Ovary (tissue), 10 donors: ENCODE measurements at regions of chr9 and their contacts with region 1.

Region 1: GRCh38 chr9:136790927-136791641 is at the start of gene TMEM141:
- DNase-seq: peak; percentile 100
- H3K4me3 ChIP-seq: peak within 1 kb of the TSS; percentile 77
- H3K27ac ChIP-seq: peak within 1 kb of the TSS; percentile 78 to 82
- H3K4me1 ChIP-seq: peaks cover 10% of the 10 kb centered on the region
- H3K27me3 ChIP-seq: no peaks in the 10 kb centered on the region
- CTCF ChIP-seq: no peak
- EP300 ChIP-seq: no peak
- POLR2A ChIP-seq: peak; percentile 36
- total RNA-seq, gene TMEM141: 43.1 to 115 (median 64.8) TPM

Region 2: GRCh38 chr9:136599811-136600660 is 191.0 kb before region 1 on chr9:
- intact Hi-C with region 1: no loop called
- DNase-seq: no peak
- H3K4me3 ChIP-seq: no peak overlapping the region
- H3K27ac ChIP-seq: no peak overlapping the region
- H3K4me1 ChIP-seq: no peaks in the 10 kb centered on the region
- H3K27me3 ChIP-seq: no peaks in the 10 kb centered on the region
- CTCF ChIP-seq: no peak
- EP300 ChIP-seq: no peak
- POLR2A ChIP-seq: no peak

Region 3: GRCh38 chr9:136849038-136849959 is 58.2 kb after region 1 on chr9 and contains the start of gene PHPT1:
- intact Hi-C with region 1: loop called in 1 of 4 experiments (anchors 10 kb)
- DNase-seq: peak; percentile 98 to 99 (median 99)
- H3K4me3 ChIP-seq: peak within 1 kb of the TSS; percentile 51
- H3K27ac ChIP-seq: peak within 1 kb of the TSS; percentile 33 to 86
- H3K4me1 ChIP-seq: peaks cover 13% of the 10 kb centered on the region
- H3K27me3 ChIP-seq: peaks cover 14% of the 10 kb centered on the region
- CTCF ChIP-seq: no peak
- EP300 ChIP-seq: no peak
- POLR2A ChIP-seq: peak; percentile 74
- total RNA-seq, gene PHPT1: 39.2 to 132 (median 86.9) TPM